Common myeloid progenitor, CD34-positive (primary cell): ENCODE measurements at regions of chr19 and their contacts with region 1.

Region 1: GRCh38 chr19:44723952-44724319 is 24.6 kb upstream of the BCL3 start:
- DNase-seq: peak; percentile 78 to 85 (median 82)
- H3K4me3 ChIP-seq: peak overlapping the region in 1 of 7 experiments; percentile 2
- H3K27ac ChIP-seq: no peak overlapping the region
- H3K4me1 ChIP-seq: peaks cover 10 to 76% (median 68%) of the 10 kb centered on the region in 4 experiments
- H3K27me3 ChIP-seq: no peaks in the 10 kb centered on the region

Region 2: GRCh38 chr19:44374789-44375188 is 349.1 kb before region 1 on chr19:
- CTCF ChIA-PET with region 1: no interaction called
- POLR2A ChIA-PET with region 1: no interaction called
- DNase-seq: no peak
- H3K4me3 ChIP-seq: no peak overlapping the region
- H3K27ac ChIP-seq: no peak overlapping the region
- H3K4me1 ChIP-seq: no peaks in the 10 kb centered on the region
- H3K27me3 ChIP-seq: no peaks in the 10 kb centered on the region

Region 3: GRCh38 chr19:44689056-44689895 is 34.7 kb before region 1 on chr19:
- CTCF ChIA-PET with region 1: interaction called, 109 read pairs
- POLR2A ChIA-PET with region 1: interaction called, 10 read pairs
- DNase-seq: peak; percentile 82 to 92 (median 88)
- H3K4me3 ChIP-seq: peak overlapping the region in 1 of 7 experiments; percentile 24
- H3K27ac ChIP-seq: no peak overlapping the region
- H3K4me1 ChIP-seq: peaks cover 7 to 46% (median 40%) of the 10 kb centered on the region in 4 experiments
- H3K27me3 ChIP-seq: peaks cover 0 to 6% (median 0%) of the 10 kb centered on the region in 5 experiments

Region 4: DNA sequence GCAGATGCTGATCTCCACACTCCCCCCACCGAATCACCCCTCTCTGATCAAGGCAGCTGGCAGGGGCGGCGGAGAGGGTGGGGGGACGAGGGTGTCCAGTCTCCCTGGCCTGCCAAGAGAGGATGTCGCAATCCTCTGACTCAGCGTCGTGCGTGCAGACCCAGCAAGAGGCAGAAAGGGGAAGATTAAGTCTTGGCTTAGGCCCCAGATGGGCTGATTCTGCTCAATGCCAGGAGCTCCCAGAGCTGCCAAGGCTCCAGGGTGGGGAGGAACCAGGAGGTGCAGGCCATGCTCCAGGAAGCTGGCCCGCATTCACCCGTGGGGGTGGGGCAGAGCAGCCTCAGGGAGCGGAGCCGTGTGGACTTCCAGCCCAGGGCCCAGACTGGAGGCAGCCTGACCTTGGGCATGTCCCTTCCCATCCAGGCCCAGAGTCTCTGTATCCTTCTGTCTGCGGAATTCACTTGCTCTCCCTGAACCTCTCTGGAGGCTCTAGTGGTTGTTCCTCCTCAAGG is 18.0 kb after region 1 on chr19:
- CTCF ChIA-PET with region 1: interaction called, 53 read pairs
- POLR2A ChIA-PET with region 1: interaction called, 3 read pairs
- DNase-seq: peak; percentile 95 to 98 (median 98)
- H3K4me3 ChIP-seq: peak overlapping the region in 1 of 7 experiments; percentile 48
- H3K27ac ChIP-seq: peak overlapping the region; percentile 33 to 79
- H3K4me1 ChIP-seq: peaks cover 17 to 84% (median 52%) of the 10 kb centered on the region in 4 experiments
- H3K27me3 ChIP-seq: no peaks in the 10 kb centered on the region

Region 5: DNA sequence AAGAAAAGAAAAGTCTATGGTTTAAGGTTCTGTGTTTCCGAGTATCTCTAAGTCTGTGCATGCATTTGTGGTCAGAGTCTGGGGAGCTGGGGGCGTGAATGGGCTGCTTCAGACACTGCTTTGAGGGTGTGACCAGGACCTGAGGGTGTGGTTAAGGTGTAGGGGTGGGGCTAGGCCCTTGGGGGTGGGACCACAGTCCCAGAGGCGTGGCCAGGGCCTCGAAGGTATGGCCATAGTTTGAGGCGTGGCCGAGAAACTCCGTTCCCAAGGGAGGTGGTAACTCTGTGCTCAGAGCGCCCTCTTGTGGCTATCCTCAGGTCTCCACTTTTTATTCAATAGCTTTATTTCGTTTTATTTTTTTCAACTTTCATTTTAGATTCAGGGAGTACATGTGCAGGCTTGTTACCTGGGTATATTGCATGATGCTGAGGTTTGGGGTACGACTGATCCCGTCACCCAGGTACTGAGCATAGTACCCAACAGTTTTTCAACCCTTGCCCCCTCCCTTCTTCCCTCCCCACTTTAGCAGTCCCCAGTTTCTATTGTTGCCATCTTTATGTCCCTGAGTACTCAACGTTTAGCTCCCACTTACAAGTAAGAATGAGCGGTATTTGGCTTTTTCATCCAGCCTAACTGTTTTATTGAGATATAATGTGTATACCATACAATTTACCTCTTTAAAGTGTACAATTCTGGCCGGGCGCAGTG is 46.8 kb after region 1 on chr19:
- CTCF ChIA-PET with region 1: interaction called, 306 read pairs
- POLR2A ChIA-PET with region 1: interaction called, 18 read pairs
- DNase-seq: peak; percentile 98 to 99 (median 99)
- H3K4me3 ChIP-seq: peak overlapping the region in 2 of 7 experiments; percentile 19 to 28
- H3K27ac ChIP-seq: no peak overlapping the region
- H3K4me1 ChIP-seq: peaks cover 3 to 29% (median 18%) of the 10 kb centered on the region in 4 experiments
- H3K27me3 ChIP-seq: no peaks in the 10 kb centered on the region